ENCODE measurements at regions of chr6 and their contacts with region 1.

Region 1: DNA sequence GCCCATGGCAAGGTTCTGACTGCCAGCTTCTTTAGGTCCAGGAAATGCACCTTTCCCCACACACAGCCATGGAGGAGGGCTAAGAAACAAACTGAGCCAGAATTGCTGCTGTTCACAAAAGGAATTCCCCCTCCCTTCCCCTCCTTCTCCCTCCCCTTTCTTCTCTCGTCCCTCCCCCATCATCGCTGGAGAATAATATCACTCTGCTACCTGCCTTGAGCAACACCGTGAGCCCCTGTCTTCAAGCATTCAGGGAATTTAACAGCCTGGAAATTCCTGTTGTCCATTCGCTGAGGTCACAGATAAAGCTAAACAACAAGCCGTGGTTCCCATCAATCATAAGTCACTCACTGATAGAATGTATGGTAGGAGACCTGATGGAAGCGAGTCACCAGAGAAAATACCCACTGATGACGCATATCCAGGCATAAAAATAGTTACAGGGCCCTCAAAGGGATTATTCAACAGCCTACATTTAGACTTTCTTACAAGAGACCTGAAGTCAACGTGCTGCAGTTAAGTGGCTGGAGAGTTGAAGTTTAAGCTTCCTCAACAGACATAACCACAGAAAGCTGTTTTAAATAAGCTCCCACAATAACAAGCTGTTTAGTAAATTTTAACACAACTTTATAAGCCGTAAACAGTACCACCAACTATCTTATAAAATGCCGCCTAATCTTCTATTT is 59.7 kb downstream of the HIVEP2 start:
- DNase-seq: peak; percentile 28
- ATAC-seq: peak; percentile 83
- H3K4me3 Mint-ChIP-seq: peak overlapping the region; percentile 98
- H3K27ac Mint-ChIP-seq: peak overlapping the region; percentile 99
- H3K4me1 Mint-ChIP-seq: peaks cover 86% of the 10 kb centered on the region
- H3K27me3 Mint-ChIP-seq: no peaks in the 10 kb centered on the region
- CTCF ChIP-seq: no peak

Region 2: GRCh38 chr6:142763205-142763604 is 122.1 kb before region 1 on chr6:
- CTCF ChIA-PET with region 1: interaction called, 3 read pairs
- POLR2A ChIA-PET with region 1: no interaction called
- intact Hi-C with region 1: loop called (anchors 5 kb)
- DNase-seq: no peak
- ATAC-seq: no peak
- H3K4me3 Mint-ChIP-seq: no peak overlapping the region
- H3K27ac Mint-ChIP-seq: peak overlapping the region; percentile 14
- H3K4me1 Mint-ChIP-seq: peaks cover 9% of the 10 kb centered on the region
- H3K27me3 Mint-ChIP-seq: no peaks in the 10 kb centered on the region
- CTCF ChIP-seq: no peak

Region 3: DNA sequence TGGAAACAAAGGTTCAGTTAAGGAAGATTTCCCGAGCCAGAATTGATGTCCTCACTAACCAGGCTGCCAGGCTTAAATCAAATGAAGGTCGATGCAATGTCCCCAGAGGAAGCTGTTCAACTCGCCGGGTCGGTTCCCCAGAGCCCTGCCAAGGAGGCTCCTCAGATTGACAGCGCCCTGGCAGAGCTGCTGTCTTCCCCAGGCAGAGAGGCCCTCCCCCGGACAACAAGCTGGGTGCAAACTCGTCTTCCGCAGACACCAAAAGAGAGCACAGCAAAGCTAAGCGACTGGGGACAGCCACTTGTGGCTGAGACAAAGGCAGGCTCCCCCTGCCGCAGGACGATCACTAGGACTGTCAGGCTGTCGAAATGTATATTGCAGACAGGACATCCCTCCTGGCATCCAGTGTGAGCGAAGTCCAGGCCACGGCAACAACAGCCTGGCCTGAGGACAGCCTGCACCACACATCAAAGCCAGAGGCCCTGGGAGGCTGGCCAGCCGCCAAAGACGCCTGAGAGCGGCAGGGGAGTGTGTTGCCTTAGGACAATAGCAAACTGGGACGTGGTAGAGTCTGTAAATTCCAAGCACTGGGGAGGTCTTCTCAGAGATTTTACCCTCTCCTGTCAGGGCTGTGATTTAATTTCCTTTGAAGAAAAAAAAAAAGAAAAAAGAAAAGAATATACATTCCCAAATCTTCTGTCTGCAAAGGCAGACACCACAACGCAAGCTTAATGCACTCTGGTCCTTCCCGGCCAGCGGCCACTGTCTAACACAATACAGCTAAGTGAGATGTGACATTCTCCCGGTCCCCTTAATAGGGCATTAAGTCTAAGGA is 39.5 kb before region 1 on chr6:
- CTCF ChIA-PET with region 1: interaction called, 4 read pairs
- POLR2A ChIA-PET with region 1: interaction called, 22 read pairs
- intact Hi-C with region 1: loop called (anchors 1 kb)
- DNase-seq: no peak
- ATAC-seq: peak; percentile 60
- H3K4me3 Mint-ChIP-seq: peak overlapping the region; percentile 78
- H3K27ac Mint-ChIP-seq: peak overlapping the region; percentile 90
- H3K4me1 Mint-ChIP-seq: peaks cover 95% of the 10 kb centered on the region
- H3K27me3 Mint-ChIP-seq: no peaks in the 10 kb centered on the region
- CTCF ChIP-seq: no peak

Region 4: GRCh38 chr6:142902636-142903053 is 17.3 kb after region 1 on chr6:
- CTCF ChIA-PET with region 1: interaction called, 4 read pairs
- POLR2A ChIA-PET with region 1: no interaction called
- intact Hi-C with region 1: loop called (anchors 2 kb)
- DNase-seq: no peak
- ATAC-seq: peak; percentile 81
- H3K4me3 Mint-ChIP-seq: peak overlapping the region; percentile 60
- H3K27ac Mint-ChIP-seq: peak overlapping the region; percentile 72
- H3K4me1 Mint-ChIP-seq: peaks cover 43% of the 10 kb centered on the region
- H3K27me3 Mint-ChIP-seq: no peaks in the 10 kb centered on the region
- CTCF ChIP-seq: no peak

Region 5: DNA sequence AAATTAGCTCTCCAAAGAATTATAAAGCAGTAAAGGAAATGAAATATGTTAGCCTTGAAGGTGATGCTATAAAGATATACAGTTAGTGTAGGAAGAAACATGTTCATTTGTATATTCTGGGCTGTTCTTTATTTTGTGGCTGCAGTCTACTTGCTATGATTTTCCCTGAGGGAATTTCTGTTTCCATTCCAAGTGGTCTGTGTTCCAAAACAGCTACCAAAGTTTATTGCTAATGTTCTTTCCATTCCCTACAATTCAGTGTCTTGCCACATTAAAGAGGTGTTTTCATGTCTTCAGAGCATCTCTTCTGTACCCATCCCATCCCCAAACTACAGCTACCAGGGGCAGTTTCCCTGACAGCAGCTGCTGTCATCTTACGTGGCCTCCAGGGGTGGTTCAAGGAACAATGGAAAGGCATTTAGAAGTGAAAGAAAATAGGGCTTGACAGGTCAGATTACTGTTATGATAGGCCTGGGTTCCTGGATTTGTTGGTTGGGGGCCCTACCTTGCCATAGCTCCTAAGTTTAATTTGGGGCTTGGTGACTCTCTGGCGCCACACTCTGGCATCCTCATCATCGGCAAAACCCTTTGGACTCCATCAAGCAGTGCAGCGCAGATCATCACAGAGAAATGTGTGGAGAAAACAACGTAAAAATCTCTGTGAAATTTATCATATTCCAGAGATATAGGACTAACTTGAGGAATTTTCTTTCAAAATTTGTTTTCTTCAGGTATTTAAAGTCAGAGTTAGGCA is 141.5 kb after region 1 on chr6:
- CTCF ChIA-PET with region 1: interaction called, 5 read pairs
- POLR2A ChIA-PET with region 1: no interaction called
- intact Hi-C with region 1: loop called (anchors 5 kb)
- DNase-seq: peak; percentile 26
- ATAC-seq: peak; percentile 68
- H3K4me3 Mint-ChIP-seq: no peak overlapping the region
- H3K27ac Mint-ChIP-seq: no peak overlapping the region
- H3K4me1 Mint-ChIP-seq: peaks cover 5% of the 10 kb centered on the region
- H3K27me3 Mint-ChIP-seq: no peaks in the 10 kb centered on the region
- CTCF ChIP-seq: no peak

Measured in activated B cell treated with CpG ODN at 0.5 μM for 24 hours (primary cell).